ENCODE measurements at regions of chr15 and their contacts with region 1.

Region 1: GRCh38 chr15:66251790-66252684 is 1.5 kb downstream of the MEGF11 start:
- DNase-seq: peak; percentile 94
- H3K4me3 ChIP-seq: peak overlapping the region; percentile 49 to 58
- H3K27ac ChIP-seq: no peak overlapping the region
- H3K4me1 ChIP-seq: peaks cover 0 to 8% of the 10 kb centered on the region in 2 experiments; a peak in 1 of 4 replicates
- H3K27me3 ChIP-seq: peaks cover 74% of the 10 kb centered on the region
- CTCF ChIP-seq: peak; percentile 74
- EP300 ChIP-seq: no peak
- RAD21 ChIP-seq: peak; percentile 59

Region 2: GRCh38 chr15:66231394-66232266 is 20.4 kb before region 1 on chr15:
- CTCF ChIA-PET with region 1: interaction called, 10 read pairs
- POLR2A ChIA-PET with region 1: no interaction called
- DNase-seq: peak; percentile 42
- H3K4me3 ChIP-seq: no peak overlapping the region
- H3K27ac ChIP-seq: peak overlapping the region in 1 of 2 experiments; percentile 44; a peak in 1 of 4 replicates
- H3K4me1 ChIP-seq: peaks cover 0 to 20% of the 10 kb centered on the region in 2 experiments; a peak in 1 of 4 replicates
- H3K27me3 ChIP-seq: no peaks in the 10 kb centered on the region
- CTCF ChIP-seq: no peak
- EP300 ChIP-seq: no peak
- RAD21 ChIP-seq: no peak

Measured in SK-N-SH (cell line).